ENCODE measurements at regions of chr19 and their contacts with region 1.

Region 1: GRCh38 chr19:50804420-50805272 is 14.4 kb downstream of the ACP4 start:
- DNase-seq: peak; percentile 87 to 99 (median 98)
- ATAC-seq: peak; percentile 98
- H3K4me3 ChIP-seq: peak overlapping the region; percentile 97
- H3K4me3 Mint-ChIP-seq: peak overlapping the region; percentile 92 to 100 (median 96)
- H3K27ac ChIP-seq: peak overlapping the region; percentile 97
- H3K27ac Mint-ChIP-seq: peak overlapping the region; percentile 97 to 100 (median 100)
- H3K4me1 ChIP-seq: peaks cover 15 to 19% of the 10 kb centered on the region in 2 donors
- H3K4me1 Mint-ChIP-seq: peaks cover 21 to 50% (median 42%) of the 10 kb centered on the region in 7 donors
- H3K27me3 ChIP-seq: no peaks in the 10 kb centered on the region
- H3K27me3 Mint-ChIP-seq: no peaks in the 10 kb centered on the region

Region 2: GRCh38 chr19:50357178-50358100 is 447.2 kb before region 1 on chr19:
- CTCF ChIA-PET with region 1: no interaction called
- POLR2A ChIA-PET with region 1: interaction called, 4 read pairs
- intact Hi-C with region 1: loop called in 1 of 2 experiments (anchors 1 kb)
- DNase-seq: peak; percentile 71 to 91 (median 85)
- ATAC-seq: peak; percentile 89
- H3K4me3 ChIP-seq: peak overlapping the region; percentile 78
- H3K4me3 Mint-ChIP-seq: peak overlapping the region; percentile 88 to 95 (median 92)
- H3K27ac ChIP-seq: peak overlapping the region; percentile 90
- H3K27ac Mint-ChIP-seq: peak overlapping the region; percentile 83 to 99 (median 96)
- H3K4me1 ChIP-seq: peaks cover 0 to 16% of the 10 kb centered on the region in 2 donors
- H3K4me1 Mint-ChIP-seq: peaks cover 15 to 48% (median 42%) of the 10 kb centered on the region in 7 donors
- H3K27me3 ChIP-seq: no peaks in the 10 kb centered on the region
- H3K27me3 Mint-ChIP-seq: no peaks in the 10 kb centered on the region

Region 3: GRCh38 chr19:50476224-50476942 is 328.3 kb before region 1 on chr19 and contains the starts of genes EMC10 and GARIN5A:
- CTCF ChIA-PET with region 1: no interaction called
- POLR2A ChIA-PET with region 1: no interaction called
- intact Hi-C with region 1: loop called in 1 of 2 experiments (anchors 1 kb)
- DNase-seq: peak; percentile 92 to 96 (median 95)
- ATAC-seq: peak; percentile 97
- H3K4me3 ChIP-seq: peak within 1 kb of the TSS; percentile 96
- H3K4me3 Mint-ChIP-seq: peak within 1 kb of the TSS; percentile 94 to 99 (median 98)
- H3K27ac ChIP-seq: peak within 1 kb of the TSS; percentile 96
- H3K27ac Mint-ChIP-seq: peak within 1 kb of the TSS; percentile 88 to 98 (median 96)
- H3K4me1 ChIP-seq: peaks cover 14 to 19% of the 10 kb centered on the region in 2 donors
- H3K4me1 Mint-ChIP-seq: peaks cover 21 to 36% (median 27%) of the 10 kb centered on the region in 7 donors
- H3K27me3 ChIP-seq: no peaks in the 10 kb centered on the region
- H3K27me3 Mint-ChIP-seq: no peaks in the 10 kb centered on the region
- total RNA-seq, gene EMC10: 75.5 to 95.2 (median 88.1) TPM
- total RNA-seq, gene GARIN5A: 0.59 to 0.93 (median 0.68) TPM in 4 of 5 experiments, not detected in the other

Region 4: DNA sequence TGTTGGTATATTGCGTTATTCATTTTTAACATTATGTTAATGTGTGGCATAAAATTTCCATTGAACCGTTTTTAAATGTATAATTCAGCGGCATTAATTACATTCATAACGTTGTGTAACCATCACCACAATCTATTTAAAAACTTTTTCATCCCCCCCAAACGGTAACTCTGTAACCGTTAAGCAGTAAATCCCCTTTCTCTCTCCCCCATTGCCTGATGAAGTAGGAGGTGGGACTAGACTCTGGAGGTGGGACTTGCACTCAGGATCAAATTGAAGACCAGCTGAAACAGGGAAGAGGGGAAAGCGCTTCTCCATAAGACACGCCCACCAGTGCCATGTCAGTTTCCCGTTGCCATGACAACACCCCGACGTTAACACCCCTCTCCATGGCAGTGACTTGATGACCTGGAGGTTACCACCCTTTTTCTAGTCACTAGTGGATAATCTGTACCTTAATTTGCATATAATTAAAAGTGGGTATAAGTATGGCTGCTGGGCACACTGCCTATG is 64.7 kb before region 1 on chr19:
- CTCF ChIA-PET with region 1: no interaction called
- POLR2A ChIA-PET with region 1: no interaction called
- intact Hi-C with region 1: no loop called
- DNase-seq: no peak
- ATAC-seq: no peak
- H3K4me3 ChIP-seq: no peak overlapping the region
- H3K4me3 Mint-ChIP-seq: no peak overlapping the region
- H3K27ac ChIP-seq: no peak overlapping the region
- H3K27ac Mint-ChIP-seq: no peak overlapping the region
- H3K4me1 ChIP-seq: no peaks in the 10 kb centered on the region
- H3K4me1 Mint-ChIP-seq: no peaks in the 10 kb centered on the region
- H3K27me3 ChIP-seq: no peaks in the 10 kb centered on the region
- H3K27me3 Mint-ChIP-seq: peaks cover 23 to 67% (median 52%) of the 10 kb centered on the region in 5 donors

Region 5: DNA sequence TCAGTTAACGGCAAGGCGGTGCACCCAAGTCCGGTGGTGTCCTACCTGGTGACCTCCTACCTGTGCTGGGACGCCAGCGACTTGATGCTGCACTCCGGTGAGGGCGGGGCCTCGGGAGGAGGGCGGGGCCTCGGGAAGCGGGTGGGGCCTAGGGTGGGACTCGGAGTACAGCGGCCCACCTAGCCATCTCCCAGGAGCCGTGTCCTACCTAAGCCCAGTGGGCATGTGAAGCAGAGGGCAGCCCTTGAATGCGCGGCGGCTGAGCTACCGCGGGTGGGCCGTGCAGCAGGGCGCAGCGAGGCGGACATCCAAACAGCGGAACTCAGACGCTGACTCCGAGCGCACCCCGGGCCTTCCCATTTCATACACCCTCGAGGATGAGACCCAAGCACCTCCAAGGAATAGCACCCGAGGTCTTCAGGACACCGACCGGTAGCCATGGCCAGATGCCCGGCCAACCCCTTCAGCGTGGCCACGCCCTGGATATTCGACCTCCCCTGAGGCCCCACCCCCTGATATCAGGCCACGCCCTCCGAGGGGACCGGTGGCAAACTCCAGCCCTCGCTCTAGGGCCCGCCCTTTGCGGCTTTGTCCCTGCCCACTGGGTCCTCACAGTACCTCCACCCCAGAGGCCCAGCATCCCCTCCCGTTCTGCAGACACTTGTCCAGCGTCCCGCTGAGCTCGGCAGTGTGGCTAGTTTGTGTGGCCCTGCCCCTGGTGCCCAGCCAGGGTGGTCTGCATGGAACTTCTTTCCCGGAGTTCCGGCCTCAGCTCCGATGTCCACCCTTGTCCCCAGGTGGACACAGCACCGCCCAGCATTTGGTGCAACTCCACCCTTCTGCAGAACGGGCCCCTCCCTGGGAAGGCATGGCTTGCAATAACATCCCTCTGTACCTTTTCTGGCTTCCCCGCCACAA is 13.6 kb after region 1 on chr19:
- CTCF ChIA-PET with region 1: no interaction called
- POLR2A ChIA-PET with region 1: no interaction called
- intact Hi-C with region 1: loop called in 1 of 2 experiments (anchors 1 kb)
- DNase-seq: peak in 1 of 9 donors; percentile 81
- ATAC-seq: peak; percentile 47
- H3K4me3 ChIP-seq: peak overlapping the region; percentile 46
- H3K4me3 Mint-ChIP-seq: peak overlapping the region in 9 of 10 donors; percentile 57 to 84 (median 71)
- H3K27ac ChIP-seq: no peak overlapping the region
- H3K27ac Mint-ChIP-seq: peak overlapping the region in 1 of 9 donors; percentile 50
- H3K4me1 ChIP-seq: peaks cover 0 to 4% of the 10 kb centered on the region in 2 donors
- H3K4me1 Mint-ChIP-seq: peaks cover 21 to 28% (median 28%) of the 10 kb centered on the region in 7 donors
- H3K27me3 ChIP-seq: peaks cover 0 to 14% of the 10 kb centered on the region in 2 donors
- H3K27me3 Mint-ChIP-seq: peaks cover 52 to 82% (median 69%) of the 10 kb centered on the region in 5 donors

Region 6: DNA sequence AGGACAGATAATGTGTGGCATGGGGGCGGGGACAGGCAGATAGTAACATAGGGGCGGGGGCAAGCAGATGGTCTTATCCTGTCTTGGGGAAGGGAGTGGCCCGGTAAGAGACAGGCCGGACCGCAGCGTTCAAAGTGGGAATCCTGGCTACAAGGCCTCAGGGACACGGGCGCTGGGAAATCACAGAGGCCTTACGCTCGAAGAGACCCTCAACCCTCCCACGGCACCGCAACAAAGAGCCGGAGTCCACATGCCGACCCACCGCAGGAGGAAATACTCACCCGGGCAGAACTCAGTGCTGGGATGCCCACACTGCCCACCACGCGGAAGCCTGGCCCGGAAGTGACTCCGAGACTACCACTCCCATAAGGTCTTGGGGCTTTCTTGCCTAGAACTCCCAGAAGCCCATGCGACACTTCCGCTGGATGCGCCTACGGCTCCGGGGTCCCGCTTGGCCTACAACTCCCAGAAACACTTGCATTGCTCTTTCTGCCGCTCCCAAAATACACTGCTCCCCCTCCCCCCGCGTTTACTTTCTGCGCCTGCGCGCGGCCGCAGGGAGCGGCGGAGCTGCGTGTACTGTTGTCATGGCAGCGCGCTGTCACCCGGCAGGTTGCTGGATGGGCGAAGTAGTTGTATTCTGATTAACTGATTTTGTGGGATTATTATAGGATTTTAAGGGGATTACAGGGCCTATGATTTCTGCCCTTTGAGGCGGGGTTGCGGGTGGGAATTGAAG is 303.6 kb after region 1 on chr19 and contains the start of gene CTU1:
- CTCF ChIA-PET with region 1: no interaction called
- POLR2A ChIA-PET with region 1: no interaction called
- intact Hi-C with region 1: loop called (anchors 1 kb)
- DNase-seq: peak; percentile 93 to 99 (median 98)
- ATAC-seq: peak; percentile 99
- H3K4me3 ChIP-seq: peak within 1 kb of the TSS; percentile 92
- H3K4me3 Mint-ChIP-seq: peak within 1 kb of the TSS; percentile 90 to 100 (median 98)
- H3K27ac ChIP-seq: peak within 1 kb of the TSS; percentile 77
- H3K27ac Mint-ChIP-seq: peak within 1 kb of the TSS; percentile 92 to 99 (median 97)
- H3K4me1 ChIP-seq: peaks cover 13% of the 10 kb centered on the region in 2 donors
- H3K4me1 Mint-ChIP-seq: peaks cover 28 to 48% (median 42%) of the 10 kb centered on the region in 7 donors
- H3K27me3 ChIP-seq: no peaks in the 10 kb centered on the region
- H3K27me3 Mint-ChIP-seq: no peaks in the 10 kb centered on the region
- total RNA-seq, gene CTU1: 3.3 to 11.8 (median 10.5) TPM

Region 7: DNA sequence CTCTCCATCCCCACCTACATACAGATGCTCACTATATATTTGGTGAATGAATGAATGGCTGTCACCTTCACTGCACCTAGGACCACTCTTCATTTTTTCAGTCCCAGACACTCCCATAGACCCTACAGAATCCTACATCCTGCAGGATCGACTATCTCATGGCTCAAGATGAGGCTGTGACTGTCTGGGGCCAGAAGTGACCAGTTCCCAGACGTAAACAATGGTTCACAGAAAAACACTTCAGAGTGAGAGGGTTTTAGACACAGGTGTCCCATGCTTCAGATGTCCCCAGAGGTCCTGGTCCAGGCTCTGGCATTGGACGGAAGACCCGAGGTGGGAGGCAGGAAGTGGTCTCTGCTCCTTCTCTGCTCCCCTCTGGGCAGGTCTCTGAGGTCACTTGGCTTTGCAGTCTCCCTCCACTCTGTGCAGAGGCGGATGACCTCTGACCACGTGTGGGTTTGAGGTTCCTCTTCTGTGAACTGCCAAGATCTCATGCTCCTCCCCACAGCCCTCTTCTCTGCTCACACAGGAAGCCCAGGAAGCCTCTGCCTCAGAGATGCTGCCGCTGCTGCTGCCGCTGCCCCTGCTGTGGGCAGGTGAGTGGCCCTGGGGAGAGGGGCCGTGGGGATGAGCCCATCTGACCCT is 362.3 kb after region 1 on chr19:
- CTCF ChIA-PET with region 1: no interaction called
- POLR2A ChIA-PET with region 1: no interaction called
- intact Hi-C with region 1: no loop called
- DNase-seq: peak in 5 of 9 donors; percentile 12 to 17 (median 15)
- ATAC-seq: peak; percentile 96
- H3K4me3 ChIP-seq: peak overlapping the region; percentile 20
- H3K4me3 Mint-ChIP-seq: peak overlapping the region; percentile 32 to 77 (median 68)
- H3K27ac ChIP-seq: no peak overlapping the region
- H3K27ac Mint-ChIP-seq: peak overlapping the region in 8 of 9 donors; percentile 26 to 85 (median 75)
- H3K4me1 ChIP-seq: peaks cover 15 to 17% of the 10 kb centered on the region in 2 donors
- H3K4me1 Mint-ChIP-seq: peaks cover 10 to 50% (median 28%) of the 10 kb centered on the region in 7 donors
- H3K27me3 ChIP-seq: no peaks in the 10 kb centered on the region
- H3K27me3 Mint-ChIP-seq: peaks cover 0 to 33% (median 7%) of the 10 kb centered on the region in 5 donors